Dendritic cell treated with granulocyte-macrophage colony-stimulating factor and Interleukin-4, amounts not matched to agents 40 ng/mL and 50 ng/mL, for 4 days (primary cell): ENCODE measurements at regions of chr14 and their contacts with region 1.

Region 1: GRCh38 chr14:61561657-61562276 is 133.5 kb upstream of the HIF1A start:
- H3K4me3 Mint-ChIP-seq: no peak overlapping the region
- H3K27ac Mint-ChIP-seq: peak overlapping the region; percentile 87
- H3K4me1 Mint-ChIP-seq: peaks cover 71% of the 10 kb centered on the region
- H3K27me3 Mint-ChIP-seq: no peaks in the 10 kb centered on the region

Region 2: DNA sequence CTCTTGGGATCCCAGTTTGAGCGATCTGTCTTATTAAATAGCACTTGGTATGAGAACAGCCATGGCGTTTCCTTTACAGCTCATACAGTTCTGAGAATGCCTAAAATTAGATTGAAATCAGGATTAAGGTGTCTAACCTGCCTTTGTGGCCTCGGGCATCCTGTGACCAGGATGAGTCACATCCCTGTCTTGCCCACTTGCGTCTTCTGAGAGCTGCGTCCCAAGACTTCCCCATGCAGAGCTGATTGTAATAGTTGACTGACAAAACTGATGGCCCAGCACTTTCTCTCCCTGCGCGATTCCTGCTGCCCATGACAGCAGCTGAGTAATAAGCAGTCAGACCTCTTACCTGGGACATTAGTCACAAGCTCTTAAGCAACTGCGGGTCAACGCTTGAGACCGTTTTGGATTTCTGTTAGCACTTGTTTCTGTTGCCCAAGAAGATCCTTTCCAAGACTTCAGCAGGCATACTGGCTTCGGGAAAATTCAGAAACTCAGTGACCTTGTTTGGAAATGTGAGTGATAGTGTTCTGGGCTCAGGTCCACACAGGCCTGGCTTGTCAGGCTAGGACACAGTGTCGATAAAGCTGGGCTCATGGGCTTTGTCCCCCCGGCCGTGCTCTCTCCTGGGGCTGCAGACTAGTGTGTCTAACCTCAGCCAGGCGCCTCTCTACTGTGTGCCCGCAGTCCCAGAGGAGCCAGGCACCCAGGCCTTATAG is 36.3 kb before region 1 on chr14:
- intact Hi-C with region 1: no loop called
- H3K4me3 Mint-ChIP-seq: no peak overlapping the region
- H3K27ac Mint-ChIP-seq: peak overlapping the region; percentile 68
- H3K4me1 Mint-ChIP-seq: peaks cover 42% of the 10 kb centered on the region
- H3K27me3 Mint-ChIP-seq: peaks cover 2% of the 10 kb centered on the region

Region 3: DNA sequence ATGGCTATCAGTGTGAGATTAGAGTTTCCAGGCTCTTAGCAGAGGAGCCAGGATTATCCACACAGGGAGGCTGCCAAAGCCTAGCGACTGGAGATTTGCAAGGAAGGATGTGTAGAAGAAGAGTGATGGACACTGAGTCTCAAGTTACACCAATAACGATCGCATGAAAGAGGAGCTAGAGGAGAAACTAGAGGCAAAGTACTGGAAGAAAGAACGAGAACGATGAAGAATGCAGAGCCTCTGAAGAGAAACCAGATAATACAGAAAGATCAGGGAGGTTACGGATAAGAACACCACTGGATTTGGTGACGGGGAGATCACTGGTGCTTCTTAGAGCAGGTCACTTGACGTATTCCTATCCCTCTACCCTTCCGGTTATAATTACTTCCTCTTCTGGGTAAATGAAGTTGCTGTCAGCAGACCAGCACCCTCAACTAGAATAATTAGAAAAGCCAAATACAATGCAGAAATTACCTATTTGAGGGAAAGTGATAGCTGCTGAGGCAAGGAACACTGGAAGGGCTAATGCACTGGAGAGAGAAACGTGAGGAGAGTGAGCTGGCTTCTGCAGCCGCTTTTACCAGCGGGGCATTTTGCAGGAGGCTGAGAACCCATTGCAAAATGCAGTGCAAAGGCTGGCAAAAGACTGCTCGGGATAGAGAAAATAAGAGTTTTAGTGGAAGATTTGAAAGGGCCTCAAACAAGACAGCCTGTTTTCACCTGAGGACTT is 40.4 kb after region 1 on chr14:
- intact Hi-C with region 1: loop called (anchors 5 kb)
- H3K4me3 Mint-ChIP-seq: peak overlapping the region; percentile 39
- H3K27ac Mint-ChIP-seq: peak overlapping the region; percentile 77
- H3K4me1 Mint-ChIP-seq: peaks cover 45% of the 10 kb centered on the region
- H3K27me3 Mint-ChIP-seq: no peaks in the 10 kb centered on the region